IMR-90 (cell line): ENCODE measurements at regions of chr2 and their contacts with region 1.

Region 1: DNA sequence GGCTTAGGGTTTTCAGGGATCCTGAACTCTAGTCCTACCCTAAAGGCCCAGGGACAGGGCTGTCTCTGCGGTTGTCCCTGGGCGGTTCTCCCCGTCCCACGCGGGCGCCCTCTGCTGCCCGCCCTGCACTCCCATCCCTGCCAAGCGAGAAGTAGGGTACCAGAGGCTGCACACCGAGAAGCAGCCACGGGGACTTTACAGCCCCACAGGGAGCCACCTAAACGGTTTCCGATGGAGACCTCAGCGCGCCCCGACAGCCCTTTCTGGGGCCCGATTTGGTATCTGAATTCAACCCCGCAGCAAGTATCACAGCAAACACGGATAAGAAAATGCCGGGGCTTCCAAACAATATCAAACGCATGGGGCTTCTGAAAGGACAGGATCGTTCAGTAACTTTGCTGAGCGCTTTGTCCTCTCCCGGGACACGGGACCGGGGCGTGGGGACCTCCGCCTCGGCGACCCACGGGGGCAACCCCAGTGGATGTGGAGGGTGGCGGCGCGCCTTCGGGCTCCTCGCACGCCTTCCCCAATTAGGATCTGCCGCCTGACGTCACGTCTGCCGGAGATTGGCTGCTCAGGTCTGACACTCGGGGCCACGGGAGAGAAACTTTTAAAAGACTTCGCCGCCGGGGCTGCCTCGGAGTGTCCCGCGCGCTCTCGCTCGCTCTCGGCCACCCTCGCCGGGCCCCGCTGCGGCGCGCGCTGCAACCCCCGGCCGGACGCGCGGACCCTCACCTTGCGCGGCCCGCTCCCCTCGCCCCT is at the start of gene LTBP1:
- DNase-seq: peak; percentile 76
- ATAC-seq: peak; percentile 77
- H3K4me3 ChIP-seq: peak within 1 kb of the TSS; percentile 61
- H3K27ac ChIP-seq: peak within 1 kb of the TSS; percentile 83
- H3K4me1 ChIP-seq: peaks cover 7% of the 10 kb centered on the region; the same call in 1 of the 2 replicates
- H3K27me3 ChIP-seq: no peaks in the 10 kb centered on the region
- CTCF ChIP-seq: peak; percentile 82
- POLR2A ChIP-seq: peak; percentile 81
- RAD21 ChIP-seq: peak; percentile 79
- total RNA-seq, gene LTBP1: 297 and 326 TPM in 2 replicates

Region 2: DNA sequence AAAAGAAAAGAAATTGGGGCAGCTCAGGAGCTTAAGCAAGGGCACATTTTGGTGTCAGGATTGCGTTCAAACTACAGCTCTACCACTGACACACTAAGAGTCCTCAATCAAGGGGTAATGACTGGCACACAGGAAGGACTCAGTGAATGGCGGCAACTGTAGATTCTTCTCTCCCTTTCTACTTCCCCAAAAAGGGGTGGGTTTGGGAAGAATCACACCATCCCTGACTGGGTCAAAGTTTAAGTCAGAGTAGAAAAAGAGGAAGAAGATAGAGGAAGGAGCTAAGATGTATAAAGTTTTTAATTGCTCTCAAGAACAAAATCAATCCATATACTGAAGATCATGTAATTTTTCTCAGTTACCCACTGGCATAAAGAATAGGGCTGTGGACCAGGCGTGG is 684.4 kb before region 1 on chr2:
- CTCF ChIA-PET with region 1: no interaction called
- POLR2A ChIA-PET with region 1: no interaction called
- dilution Hi-C with region 1: no loop called
- in situ Hi-C with region 1: no loop called
- intact Hi-C with region 1: no loop called
- DNase-seq: no peak
- ATAC-seq: no peak
- H3K4me3 ChIP-seq: no peak overlapping the region
- H3K27ac ChIP-seq: no peak overlapping the region
- H3K4me1 ChIP-seq: no peaks in the 10 kb centered on the region; the same call in 1 of the 2 replicates
- H3K27me3 ChIP-seq: no peaks in the 10 kb centered on the region; the same call in 1 of the 2 replicates
- CTCF ChIP-seq: no peak
- POLR2A ChIP-seq: no peak
- RAD21 ChIP-seq: no peak

Region 3: GRCh38 chr2:32553829-32554432 is 392.6 kb before region 1 on chr2:
- CTCF ChIA-PET with region 1: no interaction called
- POLR2A ChIA-PET with region 1: no interaction called
- dilution Hi-C with region 1: no loop called
- in situ Hi-C with region 1: no loop called
- intact Hi-C with region 1: loop called (anchors 2 kb)
- DNase-seq: peak; percentile 61
- ATAC-seq: peak; percentile 82
- H3K4me3 ChIP-seq: no peak overlapping the region
- H3K27ac ChIP-seq: no peak overlapping the region
- H3K4me1 ChIP-seq: no peaks in the 10 kb centered on the region
- H3K27me3 ChIP-seq: no peaks in the 10 kb centered on the region
- CTCF ChIP-seq: peak; percentile 74
- POLR2A ChIP-seq: no peak
- RAD21 ChIP-seq: peak; percentile 64

Region 4: GRCh38 chr2:32671885-32672533 is 274.5 kb before region 1 on chr2:
- CTCF ChIA-PET with region 1: no interaction called
- POLR2A ChIA-PET with region 1: no interaction called
- dilution Hi-C with region 1: no loop called
- in situ Hi-C with region 1: no loop called
- intact Hi-C with region 1: no loop called
- DNase-seq: no peak
- ATAC-seq: no peak
- H3K4me3 ChIP-seq: no peak overlapping the region
- H3K27ac ChIP-seq: no peak overlapping the region
- H3K4me1 ChIP-seq: no peaks in the 10 kb centered on the region
- H3K27me3 ChIP-seq: no peaks in the 10 kb centered on the region
- CTCF ChIP-seq: no peak
- POLR2A ChIP-seq: no peak
- RAD21 ChIP-seq: no peak

Region 5: DNA sequence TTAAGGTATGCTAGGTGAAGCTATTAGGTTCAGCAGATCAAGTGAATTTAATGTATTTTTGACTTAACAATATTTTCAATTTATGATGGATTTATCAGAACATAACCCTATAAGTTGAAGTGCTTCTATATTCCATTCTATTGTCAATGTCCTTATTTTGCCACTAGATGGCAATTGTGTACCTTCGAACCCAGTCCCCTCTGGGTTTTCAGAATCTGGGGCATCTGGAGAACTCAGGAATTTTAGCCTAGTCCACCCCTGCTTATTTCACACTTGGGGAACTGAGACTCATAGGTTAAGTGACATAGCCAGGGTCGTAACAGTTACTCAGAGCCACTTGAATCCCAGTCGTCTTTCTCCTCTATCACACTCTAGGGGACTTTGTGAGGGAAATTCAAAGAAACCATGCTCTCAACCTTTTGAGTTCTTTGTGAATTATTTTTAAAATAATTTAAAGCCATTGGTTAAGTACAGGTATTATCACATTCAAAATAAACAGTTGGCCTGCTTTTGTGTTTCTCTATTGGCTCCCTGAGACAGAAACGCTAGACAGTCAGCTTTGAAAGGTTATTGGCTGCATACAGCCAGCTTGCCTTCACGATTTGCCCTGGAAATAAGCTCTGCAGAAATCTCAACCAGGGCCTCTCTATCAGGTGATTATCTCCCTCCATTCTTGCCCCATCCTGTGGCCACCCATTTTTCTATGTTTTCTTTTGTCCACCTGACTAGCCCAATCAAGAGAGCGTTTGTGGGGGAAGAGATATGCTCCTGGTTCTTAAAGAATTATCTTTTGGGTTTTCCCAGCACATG is 173.7 kb before region 1 on chr2:
- CTCF ChIA-PET with region 1: interaction called, 3 read pairs
- POLR2A ChIA-PET with region 1: no interaction called
- dilution Hi-C with region 1: no loop called
- in situ Hi-C with region 1: loop called (anchors 5 kb)
- intact Hi-C with region 1: loop called (anchors 1 kb)
- DNase-seq: peak; percentile 76
- ATAC-seq: peak; percentile 95
- H3K4me3 ChIP-seq: no peak overlapping the region
- H3K27ac ChIP-seq: no peak overlapping the region
- H3K4me1 ChIP-seq: peaks cover 7% of the 10 kb centered on the region; the same call in 1 of the 2 replicates
- H3K27me3 ChIP-seq: no peaks in the 10 kb centered on the region
- CTCF ChIP-seq: peak; percentile 85
- POLR2A ChIP-seq: no peak
- RAD21 ChIP-seq: peak; percentile 95

Region 6: DNA sequence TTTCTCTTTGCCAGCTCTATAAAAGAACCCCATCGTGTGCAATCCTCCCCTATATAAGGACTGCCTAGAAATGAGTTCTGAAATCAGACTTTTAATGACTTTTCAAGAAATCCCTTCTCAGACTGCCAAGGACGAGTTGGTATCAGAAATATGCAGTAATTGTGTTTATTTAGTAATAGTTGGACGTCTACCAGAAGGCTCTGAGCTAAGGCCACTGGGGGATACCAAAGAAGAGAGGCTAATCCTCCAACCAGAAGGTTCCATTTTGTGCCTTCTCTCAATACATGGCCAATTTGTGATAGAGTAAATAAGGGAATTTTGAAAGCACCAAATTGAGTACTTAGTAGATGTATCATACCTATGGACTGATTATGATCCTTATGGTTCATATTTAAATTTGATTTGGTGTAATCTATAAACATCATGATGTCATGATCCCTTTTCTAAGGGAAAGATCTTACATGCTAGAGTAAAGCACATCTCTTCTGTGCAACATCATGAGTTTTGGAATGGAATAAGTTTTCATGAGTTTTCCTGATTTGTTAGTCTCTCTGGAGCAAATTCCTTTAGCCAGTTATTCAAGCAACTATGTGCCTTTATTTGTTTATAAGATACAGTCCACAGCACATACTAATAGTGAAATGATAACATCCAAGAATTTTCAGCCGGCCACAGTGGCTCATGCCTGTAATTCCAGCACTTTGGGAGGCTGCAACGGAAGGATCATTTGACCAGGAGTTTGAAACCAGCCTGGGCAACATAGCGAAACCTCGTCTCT is 82.0 kb before region 1 on chr2:
- CTCF ChIA-PET with region 1: interaction called, 3 read pairs
- POLR2A ChIA-PET with region 1: no interaction called
- dilution Hi-C with region 1: no loop called
- in situ Hi-C with region 1: no loop called
- intact Hi-C with region 1: loop called (anchors 5 kb)
- DNase-seq: peak; percentile 93
- ATAC-seq: peak; percentile 90
- H3K4me3 ChIP-seq: no peak overlapping the region; the same call in 1 of the 2 replicates
- H3K27ac ChIP-seq: peak overlapping the region; percentile 94
- H3K4me1 ChIP-seq: peaks cover 16% of the 10 kb centered on the region
- H3K27me3 ChIP-seq: no peaks in the 10 kb centered on the region
- CTCF ChIP-seq: no peak
- POLR2A ChIP-seq: no peak
- RAD21 ChIP-seq: no peak

Region 7: DNA sequence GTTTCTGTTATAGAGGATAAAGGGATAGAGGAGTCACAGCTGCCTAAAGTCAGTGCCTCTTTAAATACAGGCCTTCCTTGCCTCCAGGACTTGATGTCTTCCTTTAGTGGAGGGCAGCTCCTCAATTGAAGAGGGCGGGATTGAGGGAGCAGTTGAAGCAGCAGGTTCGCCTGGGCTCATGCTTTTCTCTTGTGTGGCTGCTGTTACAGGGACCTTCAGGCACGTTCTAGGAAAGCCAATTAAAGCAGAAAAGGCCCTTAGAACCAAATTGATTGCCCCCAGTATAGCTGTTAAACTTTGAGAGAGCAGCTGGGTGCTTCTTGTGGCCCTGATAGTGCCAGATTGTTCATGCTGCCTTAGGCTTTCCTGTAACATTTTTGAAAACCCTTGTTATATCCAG is 41.7 kb before region 1 on chr2:
- CTCF ChIA-PET with region 1: no interaction called
- POLR2A ChIA-PET with region 1: no interaction called
- dilution Hi-C with region 1: no loop called
- in situ Hi-C with region 1: no loop called
- intact Hi-C with region 1: no loop called
- DNase-seq: no peak
- ATAC-seq: no peak
- H3K4me3 ChIP-seq: no peak overlapping the region
- H3K27ac ChIP-seq: no peak overlapping the region
- H3K4me1 ChIP-seq: peaks cover 2% of the 10 kb centered on the region; the same call in 1 of the 2 replicates
- H3K27me3 ChIP-seq: peaks cover 14% of the 10 kb centered on the region
- CTCF ChIP-seq: no peak
- POLR2A ChIP-seq: no peak
- RAD21 ChIP-seq: no peak

Region 8: GRCh38 chr2:33022989-33023727 is 76.7 kb after region 1 on chr2:
- CTCF ChIA-PET with region 1: no interaction called
- POLR2A ChIA-PET with region 1: no interaction called
- dilution Hi-C with region 1: no loop called
- in situ Hi-C with region 1: no loop called
- intact Hi-C with region 1: loop called (anchors 5 kb)
- DNase-seq: peak; percentile 95
- ATAC-seq: peak; percentile 88
- H3K4me3 ChIP-seq: no peak overlapping the region
- H3K27ac ChIP-seq: peak overlapping the region; percentile 96
- H3K4me1 ChIP-seq: peaks cover 15% of the 10 kb centered on the region
- H3K27me3 ChIP-seq: no peaks in the 10 kb centered on the region
- CTCF ChIP-seq: no peak
- POLR2A ChIP-seq: no peak
- RAD21 ChIP-seq: no peak; the same call in 1 of the 2 replicates

Region 9: GRCh38 chr2:33033606-33034081 is 87.1 kb after region 1 on chr2:
- CTCF ChIA-PET with region 1: interaction called, 4 read pairs
- POLR2A ChIA-PET with region 1: no interaction called
- dilution Hi-C with region 1: no loop called
- in situ Hi-C with region 1: no loop called
- intact Hi-C with region 1: loop called (anchors 1 kb)
- DNase-seq: peak; percentile 66
- ATAC-seq: peak; percentile 80
- H3K4me3 ChIP-seq: no peak overlapping the region
- H3K27ac ChIP-seq: peak overlapping the region; percentile 42; the same call in 1 of the 2 replicates
- H3K4me1 ChIP-seq: peaks cover 4% of the 10 kb centered on the region
- H3K27me3 ChIP-seq: no peaks in the 10 kb centered on the region
- CTCF ChIP-seq: peak; percentile 75
- POLR2A ChIP-seq: no peak
- RAD21 ChIP-seq: peak; percentile 68

Region 10: GRCh38 chr2:33094303-33094702 is 147.8 kb after region 1 on chr2:
- CTCF ChIA-PET with region 1: no interaction called
- POLR2A ChIA-PET with region 1: no interaction called
- dilution Hi-C with region 1: no loop called
- in situ Hi-C with region 1: no loop called
- intact Hi-C with region 1: no loop called
- DNase-seq: no peak
- ATAC-seq: no peak
- H3K4me3 ChIP-seq: no peak overlapping the region
- H3K27ac ChIP-seq: no peak overlapping the region
- H3K4me1 ChIP-seq: 0 out of 2 replicates have a peak, but pooled peaks cover 2% of the 10 kb centered on the region
- H3K27me3 ChIP-seq: no peaks in the 10 kb centered on the region
- CTCF ChIP-seq: no peak
- POLR2A ChIP-seq: no peak
- RAD21 ChIP-seq: no peak